ENCODE measurements at regions of chr21 and their contacts with region 1.

Region 1: DNA sequence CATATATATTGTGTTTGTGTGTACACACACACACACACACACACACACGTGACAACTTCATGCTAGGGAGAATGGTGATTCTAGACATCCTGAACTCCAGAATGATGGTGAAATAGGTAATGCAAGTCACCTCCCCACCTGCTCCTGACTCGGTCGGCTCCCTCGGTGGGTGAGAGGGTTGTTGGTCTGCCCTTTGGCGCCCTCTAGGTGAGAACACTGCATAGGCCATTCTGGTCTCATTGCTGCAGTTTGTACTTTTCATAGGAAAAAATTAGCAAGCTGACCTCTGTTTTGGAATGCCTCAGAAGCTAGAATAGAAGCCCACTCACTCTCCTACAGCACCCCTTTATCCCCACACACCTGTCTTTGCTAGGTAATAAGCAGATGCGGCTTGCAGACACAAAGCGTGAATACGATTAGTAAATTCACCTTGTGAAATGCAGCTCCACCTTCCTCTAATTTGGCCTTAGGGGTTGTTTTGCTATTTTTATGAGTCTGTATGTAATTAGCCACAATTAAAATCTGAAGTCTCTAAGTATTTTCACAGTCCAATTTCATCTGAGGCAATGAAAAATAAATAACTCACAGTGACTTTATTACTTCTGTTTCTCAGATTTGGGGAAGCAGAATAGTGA is 130.0 kb upstream of the KCNJ15 start:
- DNase-seq: peak in 1 of 2 experiments; percentile 36
- H3K4me3 ChIP-seq: no peak overlapping the region
- H3K27ac ChIP-seq: no peak overlapping the region
- H3K4me1 ChIP-seq: no peaks in the 10 kb centered on the region
- H3K27me3 ChIP-seq: peaks cover 5% of the 10 kb centered on the region; the same call in 1 of the 2 replicates
- CTCF ChIP-seq: peak; percentile 67

Region 2: GRCh38 chr21:37496972-37497371 is 629.8 kb before region 1 on chr21:
- CTCF ChIA-PET with region 1: no interaction called
- POLR2A ChIA-PET with region 1: no interaction called
- intact Hi-C with region 1: loop called (anchors 5 kb)
- DNase-seq: no peak
- H3K4me3 ChIP-seq: no peak overlapping the region
- H3K27ac ChIP-seq: no peak overlapping the region
- H3K4me1 ChIP-seq: no peaks in the 10 kb centered on the region
- H3K27me3 ChIP-seq: no peaks in the 10 kb centered on the region
- CTCF ChIP-seq: peak; percentile 57

Region 3: DNA sequence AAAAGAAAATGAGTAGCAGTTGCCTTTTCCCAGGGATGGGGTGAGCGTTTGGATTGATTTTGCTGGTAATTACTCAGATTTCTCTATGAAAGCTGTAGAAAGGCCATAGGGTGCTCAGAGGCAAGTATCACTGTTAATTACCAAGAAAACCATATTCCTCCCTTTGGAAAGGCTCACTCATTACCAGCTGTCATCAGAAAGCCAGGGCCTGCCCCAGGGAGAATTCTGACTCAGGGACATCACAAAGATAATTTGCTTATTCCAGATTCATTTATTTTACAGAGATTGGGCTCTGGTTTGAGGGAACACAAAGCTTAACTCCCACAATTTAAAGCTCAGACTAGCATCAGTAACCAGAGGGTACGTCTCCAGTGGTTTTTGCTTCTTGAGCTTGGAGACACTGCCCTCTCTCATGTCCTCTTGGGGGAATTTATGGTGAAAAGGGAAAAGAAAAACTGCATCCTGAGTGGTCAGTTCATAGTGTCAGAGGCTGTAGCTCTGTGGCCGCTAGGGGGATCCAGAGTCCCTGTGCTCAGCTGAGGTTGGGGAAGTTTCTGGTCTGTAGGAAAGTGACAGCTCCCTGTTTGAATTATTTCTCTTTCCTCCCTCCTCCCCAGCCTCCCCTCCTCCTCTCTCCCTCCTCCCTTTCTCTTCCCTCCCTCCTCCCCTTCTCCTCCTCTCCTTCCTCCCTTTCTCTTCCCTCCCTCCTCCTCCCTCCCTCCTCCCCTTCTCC is 414.8 kb before region 1 on chr21:
- CTCF ChIA-PET with region 1: interaction called, 11 read pairs
- POLR2A ChIA-PET with region 1: interaction called, 7 read pairs
- intact Hi-C with region 1: loop called (anchors 10 kb)
- DNase-seq: peak in 1 of 2 experiments; percentile 45
- H3K4me3 ChIP-seq: no peak overlapping the region
- H3K27ac ChIP-seq: no peak overlapping the region
- H3K4me1 ChIP-seq: peaks cover 5% of the 10 kb centered on the region; the same call in 1 of the 2 replicates
- H3K27me3 ChIP-seq: peaks cover 7% of the 10 kb centered on the region; the same call in 1 of the 2 replicates
- CTCF ChIP-seq: peak; percentile 73

Region 4: DNA sequence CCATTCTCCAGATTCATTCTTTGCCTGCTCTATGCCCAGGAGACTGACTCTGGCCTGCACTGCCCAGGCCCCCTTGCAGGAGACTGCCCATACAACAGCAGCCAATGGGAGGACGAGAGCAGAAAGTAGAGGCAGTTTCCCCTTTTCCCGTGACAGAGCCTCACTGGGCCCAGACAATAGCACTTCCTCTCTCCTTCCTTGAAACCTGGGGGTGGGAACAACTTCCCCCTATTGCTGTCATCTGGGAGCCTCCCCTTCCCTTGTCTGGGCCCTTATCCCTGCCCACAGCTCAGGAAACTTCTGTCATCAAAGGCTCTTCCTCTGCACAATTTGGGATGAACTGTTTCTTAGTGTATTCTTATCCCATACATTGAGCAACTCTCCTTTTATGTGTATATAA is 69.2 kb after region 1 on chr21:
- CTCF ChIA-PET with region 1: no interaction called
- POLR2A ChIA-PET with region 1: no interaction called
- intact Hi-C with region 1: no loop called
- DNase-seq: no peak
- H3K4me3 ChIP-seq: no peak overlapping the region
- H3K27ac ChIP-seq: no peak overlapping the region
- H3K4me1 ChIP-seq: no peaks in the 10 kb centered on the region
- H3K27me3 ChIP-seq: no peaks in the 10 kb centered on the region
- CTCF ChIP-seq: no peak

Measured in PC-9 (cell line).